GM10248 (cell line): ENCODE measurements at regions of chr14 and their contacts with region 1.

Region 1: GRCh38 chr14:24366721-24367513 is 1.1 kb upstream of the NFATC4 start:
- DNase-seq: peak; percentile 91
- CTCF ChIP-seq: no peak

Region 2: GRCh38 chr14:24339284-24340151 is 27.4 kb before region 1 on chr14 and contains the start of gene RIPK3:
- CTCF ChIA-PET with region 1: interaction called, 12 read pairs
- POLR2A ChIA-PET with region 1: no interaction called
- DNase-seq: peak; percentile 84
- CTCF ChIP-seq: no peak